RWPE1 (cell line): ENCODE measurements at regions of chr11 and their contacts with region 1.

Region 1: GRCh38 chr11:69707176-69707575 is 3.4 kb upstream of the FGF19 start:
- DNase-seq: peak; percentile 87
- H3K27ac ChIP-seq: no peak overlapping the region
- CTCF ChIP-seq: no peak

Region 2: GRCh38 chr11:69654569-69655327 is 52.4 kb before region 1 on chr11:
- CTCF ChIA-PET with region 1: no interaction called
- POLR2A ChIA-PET with region 1: no interaction called
- DNase-seq: no peak
- H3K27ac ChIP-seq: peak overlapping the region; percentile 48
- CTCF ChIP-seq: no peak

Region 3: GRCh38 chr11:69746752-69747742 is 39.9 kb after region 1 on chr11:
- CTCF ChIA-PET with region 1: no interaction called
- POLR2A ChIA-PET with region 1: interaction called, 13 read pairs
- DNase-seq: no peak
- H3K27ac ChIP-seq: no peak overlapping the region
- CTCF ChIP-seq: no peak